AG04449 (cell line): ENCODE measurements at regions of chr4 and their contacts with region 1.

Region 1: DNA sequence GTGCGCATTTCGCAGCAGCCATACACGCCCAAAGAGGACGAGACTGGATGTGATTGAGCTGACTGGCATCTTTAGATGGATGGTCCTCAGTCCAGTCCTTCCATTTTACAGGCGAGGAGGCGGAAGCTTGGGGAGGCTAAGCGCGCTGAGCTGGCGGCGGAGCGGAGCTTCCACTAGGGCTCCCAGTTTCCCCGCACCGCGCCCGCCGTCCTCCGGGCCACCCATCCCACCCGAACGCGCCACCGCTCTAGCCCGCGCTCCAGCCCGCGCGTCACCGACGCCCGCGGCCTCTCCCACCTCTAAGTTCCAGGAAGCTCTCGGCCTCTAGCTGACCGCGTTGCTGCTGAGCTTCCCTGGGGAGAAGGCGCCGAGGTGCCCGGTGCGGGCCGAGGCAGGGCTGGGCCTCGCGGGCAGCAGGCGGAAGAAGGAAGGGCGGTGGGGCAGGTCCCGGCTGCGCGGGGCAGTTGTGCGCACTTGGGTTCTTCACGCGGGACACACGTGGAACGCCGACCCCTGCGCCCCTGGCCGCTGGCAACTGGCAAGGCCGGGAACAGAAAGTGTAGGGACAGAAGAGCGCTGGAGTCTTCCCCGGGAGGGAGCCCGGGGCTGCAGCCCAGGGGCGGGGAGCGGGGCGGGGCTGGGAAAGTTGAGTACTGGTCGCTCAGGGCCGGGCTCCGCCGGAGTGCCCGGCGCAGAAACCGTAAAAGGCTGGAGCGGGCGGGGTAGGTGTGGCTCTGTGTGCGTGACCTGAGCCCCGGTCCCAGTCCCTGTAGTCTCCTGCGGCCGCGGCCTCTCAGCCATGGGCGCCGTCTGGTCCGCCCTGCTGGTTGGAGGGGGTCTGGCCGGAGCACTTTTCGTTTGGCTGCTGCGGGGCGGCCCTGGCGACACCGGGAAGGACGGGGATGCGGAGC is at the start of gene STBD1:
- DNase-seq: no peak
- H3K4me3 ChIP-seq: peak within 1 kb of the TSS; percentile 79
- CTCF ChIP-seq: no peak

Region 2: GRCh38 chr4:76322236-76322635 is 16.0 kb after region 1 on chr4:
- CTCF ChIA-PET with region 1: interaction called, 10 read pairs
- POLR2A ChIA-PET with region 1: no interaction called
- DNase-seq: no peak
- H3K4me3 ChIP-seq: no peak overlapping the region
- CTCF ChIP-seq: no peak

Region 3: DNA sequence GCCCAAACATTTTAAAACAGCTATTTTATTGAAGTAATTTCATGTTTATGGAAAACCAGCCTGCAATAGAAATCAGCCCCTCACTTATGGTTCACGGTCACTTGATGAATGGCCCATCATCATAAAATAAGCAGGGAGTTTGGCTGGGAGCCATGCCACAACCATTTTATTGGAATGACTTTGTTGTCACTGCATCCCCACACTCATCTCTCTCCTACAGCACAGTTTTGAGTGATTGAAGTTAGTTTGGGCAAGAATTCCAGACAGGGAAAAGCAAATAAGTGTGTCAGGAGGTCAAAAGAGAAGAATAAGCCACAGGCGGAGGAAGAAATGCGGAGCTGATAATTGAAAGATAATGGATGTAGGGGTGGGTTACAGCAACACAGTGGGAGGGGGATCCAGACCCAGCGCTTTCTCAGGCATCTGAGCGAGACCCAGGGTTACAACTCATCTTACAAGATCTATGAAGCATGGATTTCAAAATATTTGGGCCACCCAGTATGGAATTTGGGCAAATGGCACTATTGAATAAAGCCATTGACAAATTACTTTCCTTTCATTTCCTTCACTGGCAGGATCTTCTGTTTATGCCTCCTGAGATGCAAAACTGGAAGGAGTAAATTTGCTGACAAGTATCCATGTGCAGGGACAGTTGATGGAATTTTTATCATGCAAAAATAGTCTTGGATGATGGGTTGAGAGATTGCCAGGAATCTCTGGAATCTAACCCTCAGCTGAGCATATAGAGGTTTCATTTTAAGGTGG is 229.6 kb after region 1 on chr4:
- CTCF ChIA-PET with region 1: no interaction called
- POLR2A ChIA-PET with region 1: no interaction called
- DNase-seq: no peak
- H3K4me3 ChIP-seq: no peak overlapping the region
- CTCF ChIP-seq: no peak